GM12878 (cell line): ENCODE measurements at regions of chr2 and their contacts with region 1.

Region 1: DNA sequence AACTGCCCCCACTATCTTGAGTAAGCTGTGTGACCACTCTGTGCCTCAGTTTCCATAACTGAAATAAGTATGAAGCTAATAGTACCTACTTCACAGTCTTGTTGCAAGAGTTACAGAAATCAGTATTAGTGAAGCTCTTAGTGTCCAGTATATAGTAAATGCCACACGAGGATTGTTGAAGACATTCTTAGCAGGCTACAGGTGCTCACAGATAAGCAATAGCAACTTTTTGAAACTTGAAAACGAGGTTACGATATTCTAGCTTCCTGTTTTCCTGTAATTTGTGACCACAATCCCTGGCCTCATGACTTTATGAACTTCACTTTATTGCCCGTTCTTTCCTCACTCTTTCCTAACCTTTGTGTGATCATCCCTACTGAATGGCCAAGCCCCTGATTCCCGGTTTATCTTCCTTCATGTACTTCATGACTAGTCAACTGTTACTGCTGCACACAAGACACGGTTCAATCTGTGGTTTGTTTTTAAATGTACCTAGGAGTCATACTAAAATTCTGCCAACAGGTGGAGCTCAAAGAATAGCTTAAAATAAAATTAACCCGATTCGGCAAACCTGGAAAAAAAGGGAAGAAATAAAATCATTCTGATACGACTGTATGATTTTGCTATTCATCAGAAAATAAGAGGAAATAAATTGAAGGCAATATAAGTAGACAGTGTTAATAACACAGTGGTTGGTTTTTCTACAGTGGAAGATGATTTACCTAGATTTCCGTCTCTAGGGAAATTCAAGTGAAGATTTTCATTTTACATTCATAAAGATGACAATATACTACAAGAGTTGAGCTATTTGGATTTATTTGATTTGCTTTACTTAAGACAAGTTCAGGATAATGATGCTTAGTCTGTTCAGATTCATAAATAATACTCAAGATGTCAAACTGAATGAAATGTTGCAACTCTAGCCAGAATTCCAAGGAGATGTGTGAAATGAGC is 38.1 kb upstream of the STAT1 start:
- DNase-seq: peak; percentile 12
- ATAC-seq: peak; percentile 66
- H3K4me3 ChIP-seq: no peak overlapping the region
- H3K27ac ChIP-seq: no peak overlapping the region
- H3K4me1 ChIP-seq: peaks cover 6% of the 10 kb centered on the region
- H3K27me3 ChIP-seq: no peaks in the 10 kb centered on the region
- CTCF ChIP-seq: peak; percentile 48 to 69 (median 60)
- EP300 ChIP-seq: no peak
- POLR2A ChIP-seq: no peak
- RAD21 ChIP-seq: peak; percentile 86

Region 2: GRCh38 chr2:190365499-190366204 is 686.5 kb before region 1 on chr2:
- CTCF ChIA-PET with region 1: no interaction called
- POLR2A ChIA-PET with region 1: no interaction called
- RAD21 ChIA-PET with region 1: no interaction called
- SMC1A ChIA-PET with region 1: no interaction called
- in situ Hi-C with region 1: no loop called
- intact Hi-C with region 1: no loop called
- DNase-seq: no peak
- ATAC-seq: no peak
- H3K4me3 ChIP-seq: no peak overlapping the region
- H3K27ac ChIP-seq: no peak overlapping the region
- H3K4me1 ChIP-seq: no peaks in the 10 kb centered on the region
- H3K27me3 ChIP-seq: no peaks in the 10 kb centered on the region
- CTCF ChIP-seq: no peak
- EP300 ChIP-seq: no peak
- POLR2A ChIP-seq: no peak
- RAD21 ChIP-seq: no peak

Region 3: DNA sequence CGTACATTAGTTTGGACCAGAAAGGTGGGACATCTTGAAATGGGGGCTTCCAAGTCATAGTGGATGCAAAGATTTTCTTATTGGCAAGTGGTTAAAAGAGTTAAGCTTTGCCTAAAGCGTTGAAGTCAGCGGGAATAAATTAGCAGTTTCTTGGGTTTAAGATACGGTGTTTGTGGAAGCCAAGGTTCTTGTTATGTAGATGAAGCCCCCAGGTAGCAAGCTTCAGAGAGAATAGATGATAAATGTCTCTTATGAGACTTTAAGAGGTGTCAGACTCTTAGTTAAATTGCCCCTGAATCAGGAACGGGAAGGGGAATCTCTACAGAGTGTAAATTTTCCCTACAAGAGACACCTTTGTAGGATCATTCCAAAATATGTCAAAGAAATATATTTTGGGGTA is 182.4 kb before region 1 on chr2:
- CTCF ChIA-PET with region 1: no interaction called
- POLR2A ChIA-PET with region 1: no interaction called
- RAD21 ChIA-PET with region 1: no interaction called
- SMC1A ChIA-PET with region 1: no interaction called
- in situ Hi-C with region 1: no loop called
- intact Hi-C with region 1: no loop called
- DNase-seq: no peak
- ATAC-seq: no peak
- H3K4me3 ChIP-seq: no peak overlapping the region
- H3K27ac ChIP-seq: no peak overlapping the region
- H3K4me1 ChIP-seq: no peaks in the 10 kb centered on the region
- H3K27me3 ChIP-seq: no peaks in the 10 kb centered on the region
- CTCF ChIP-seq: no peak
- EP300 ChIP-seq: no peak
- POLR2A ChIP-seq: no peak
- RAD21 ChIP-seq: no peak

Region 4: DNA sequence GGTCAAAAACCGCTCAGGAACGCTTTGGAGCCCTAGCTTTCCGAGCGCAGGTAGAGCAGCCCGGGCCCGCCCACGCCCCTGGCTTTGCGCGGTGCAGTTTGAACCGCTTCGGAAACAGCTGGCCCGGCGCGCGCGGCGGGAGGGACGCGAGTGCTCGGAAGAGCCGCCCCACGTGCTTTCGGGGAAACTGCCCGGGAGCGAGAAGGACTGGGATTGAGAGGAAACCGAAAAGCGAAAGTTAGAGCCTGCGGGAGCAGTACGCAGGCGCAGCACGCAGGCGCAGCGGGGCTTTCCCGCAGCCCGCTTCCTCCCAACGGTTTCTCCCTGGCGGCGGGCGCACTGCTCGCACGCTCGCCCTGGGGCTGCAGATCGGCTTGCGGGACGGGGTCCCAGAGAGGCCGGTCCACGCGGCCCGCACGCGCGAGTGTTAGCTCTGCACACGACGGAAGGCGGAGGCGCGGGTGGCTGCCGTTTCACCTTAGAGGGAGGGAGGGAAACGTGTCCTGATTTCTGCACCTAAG is 31.8 kb before region 1 on chr2:
- CTCF ChIA-PET with region 1: interaction called, 8 read pairs
- POLR2A ChIA-PET with region 1: interaction called, 6 read pairs
- RAD21 ChIA-PET with region 1: interaction called, 13 read pairs
- SMC1A ChIA-PET with region 1: interaction called, 13 read pairs
- in situ Hi-C with region 1: no loop called
- intact Hi-C with region 1: no loop called
- DNase-seq: peak; percentile 93
- ATAC-seq: peak; percentile 80
- H3K4me3 ChIP-seq: peak overlapping the region; percentile 69
- H3K27ac ChIP-seq: peak overlapping the region; percentile 100
- H3K4me1 ChIP-seq: peaks cover 48% of the 10 kb centered on the region
- H3K27me3 ChIP-seq: no peaks in the 10 kb centered on the region
- CTCF ChIP-seq: no peak
- EP300 ChIP-seq: peak; percentile 97 to 100
- POLR2A ChIP-seq: peak; percentile 97
- RAD21 ChIP-seq: no peak

Region 5: GRCh38 chr2:191103774-191104173 is 51.7 kb after region 1 on chr2:
- CTCF ChIA-PET with region 1: interaction called, 17 read pairs
- POLR2A ChIA-PET with region 1: interaction called, 4 read pairs
- RAD21 ChIA-PET with region 1: interaction called, 3 read pairs
- SMC1A ChIA-PET with region 1: interaction called, 33 read pairs
- in situ Hi-C with region 1: no loop called
- intact Hi-C with region 1: no loop called
- DNase-seq: no peak
- ATAC-seq: no peak
- H3K4me3 ChIP-seq: no peak overlapping the region
- H3K27ac ChIP-seq: no peak overlapping the region
- H3K4me1 ChIP-seq: no peaks in the 10 kb centered on the region
- H3K27me3 ChIP-seq: no peaks in the 10 kb centered on the region; a peak in 1 of 4 replicates
- CTCF ChIP-seq: no peak
- EP300 ChIP-seq: no peak
- POLR2A ChIP-seq: no peak
- RAD21 ChIP-seq: no peak

Region 6: GRCh38 chr2:191158193-191158592 is 106.1 kb after region 1 on chr2:
- CTCF ChIA-PET with region 1: interaction called, 659 read pairs
- POLR2A ChIA-PET with region 1: interaction called, 13 read pairs
- RAD21 ChIA-PET with region 1: interaction called, 324 read pairs
- SMC1A ChIA-PET with region 1: interaction called, 393 read pairs
- in situ Hi-C with region 1: loop called (anchors 5 kb)
- intact Hi-C with region 1: loop called (anchors 1 kb)
- DNase-seq: no peak
- ATAC-seq: no peak
- H3K4me3 ChIP-seq: no peak overlapping the region
- H3K27ac ChIP-seq: no peak overlapping the region
- H3K4me1 ChIP-seq: no peaks in the 10 kb centered on the region
- H3K27me3 ChIP-seq: no peaks in the 10 kb centered on the region; a peak in 1 of 4 replicates
- CTCF ChIP-seq: no peak
- EP300 ChIP-seq: no peak
- POLR2A ChIP-seq: no peak
- RAD21 ChIP-seq: no peak

Region 7: GRCh38 chr2:191195021-191195420 is 142.9 kb after region 1 on chr2:
- CTCF ChIA-PET with region 1: interaction called, 6 read pairs
- POLR2A ChIA-PET with region 1: no interaction called
- RAD21 ChIA-PET with region 1: interaction called, 4 read pairs
- SMC1A ChIA-PET with region 1: interaction called, 10 read pairs
- in situ Hi-C with region 1: no loop called
- intact Hi-C with region 1: no loop called
- DNase-seq: no peak
- ATAC-seq: no peak
- H3K4me3 ChIP-seq: no peak overlapping the region
- H3K27ac ChIP-seq: no peak overlapping the region
- H3K4me1 ChIP-seq: peaks cover 18% of the 10 kb centered on the region
- H3K27me3 ChIP-seq: no peaks in the 10 kb centered on the region
- CTCF ChIP-seq: no peak
- EP300 ChIP-seq: no peak
- POLR2A ChIP-seq: no peak
- RAD21 ChIP-seq: no peak